HEK293 (cell line): ENCODE measurements at regions of chr19 and their contacts with region 1.

Region 1: DNA sequence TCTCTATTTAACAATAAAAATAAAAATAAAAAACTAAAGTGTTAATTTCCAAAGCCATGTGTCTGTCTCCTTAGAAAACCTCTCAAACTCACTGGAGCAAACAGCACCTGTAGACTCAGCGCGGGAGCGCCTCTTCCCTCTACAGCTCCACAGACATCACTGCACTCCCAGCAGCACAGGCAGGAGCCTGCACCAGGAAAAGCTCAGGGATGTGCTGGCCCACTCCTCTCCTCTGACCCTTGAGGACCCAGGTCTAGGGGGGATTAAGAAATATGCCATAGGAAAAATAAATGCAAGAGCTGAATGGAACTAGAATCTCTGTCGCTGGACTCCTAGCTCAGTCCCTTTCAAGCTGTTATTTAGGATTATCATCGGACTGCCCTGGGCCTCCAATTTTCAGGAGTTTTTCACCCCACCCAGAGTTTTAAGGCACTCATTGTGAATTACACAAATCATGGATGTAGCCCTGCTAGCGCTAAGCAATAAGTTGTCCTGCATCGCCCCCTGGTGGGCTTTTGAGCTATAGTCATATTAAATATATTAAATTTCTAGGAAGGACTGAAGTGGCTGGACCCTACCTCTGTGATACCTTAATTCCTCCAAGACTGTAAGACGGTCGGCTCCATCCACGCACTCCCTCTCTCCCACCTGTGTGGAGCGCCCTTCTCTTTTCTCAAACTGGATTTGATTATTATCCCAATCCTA is 333.9 kb downstream of the UQCRFS1 start:
- H3K4me3 ChIP-seq: no peak overlapping the region
- H3K27ac ChIP-seq: no peak overlapping the region
- H3K4me1 ChIP-seq: peaks cover 4% of the 10 kb centered on the region; the same call in 1 of the 2 replicates
- CTCF ChIP-seq: peak; percentile 65; the same call in 1 of the 2 replicates

Region 2: DNA sequence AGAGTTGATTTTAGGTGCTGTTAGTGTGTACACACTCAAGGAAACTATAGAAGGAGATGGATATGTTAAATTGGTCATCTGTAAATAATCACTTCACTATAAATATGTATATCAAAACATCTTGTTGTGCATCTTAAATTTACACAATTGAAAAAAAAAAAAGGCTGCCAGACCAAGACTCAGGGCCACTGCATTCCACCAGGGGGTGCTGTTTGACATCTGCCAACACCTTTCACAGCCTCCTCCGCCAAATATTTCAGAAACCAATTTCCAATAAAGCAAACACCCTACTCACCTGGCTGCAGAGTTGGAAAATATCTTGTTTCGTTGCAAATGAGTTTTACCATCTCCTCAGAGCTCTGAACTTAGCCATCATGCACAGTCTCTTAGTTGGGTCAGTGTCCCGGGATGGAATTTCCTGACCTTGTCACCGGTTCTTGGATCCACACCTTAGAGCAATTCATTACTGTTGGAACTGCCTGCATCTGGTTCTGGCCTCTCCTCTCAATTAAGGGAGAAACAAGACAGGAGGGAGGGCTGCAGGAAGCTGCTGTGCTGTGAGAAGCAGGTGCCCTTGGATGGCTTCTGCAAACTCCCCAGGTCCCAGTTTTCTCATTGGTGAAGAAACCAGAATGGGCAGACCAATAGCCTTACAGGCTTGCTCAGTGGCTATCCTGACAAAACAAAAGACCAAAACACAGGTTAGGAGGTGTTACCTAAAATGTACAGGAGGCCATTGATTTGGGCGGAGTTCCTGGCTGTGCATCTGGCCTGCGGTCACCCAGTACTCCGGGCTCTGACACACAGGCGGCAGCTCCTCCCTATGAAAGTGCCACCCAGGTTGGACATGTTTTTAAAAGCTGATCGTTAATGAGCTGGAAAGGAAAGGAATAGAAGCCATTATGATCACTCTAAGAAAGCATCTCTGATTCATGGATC is 412.6 kb before region 1 on chr19:
- CTCF ChIA-PET with region 1: interaction called, 18 read pairs
- POLR2A ChIA-PET with region 1: no interaction called
- H3K4me3 ChIP-seq: no peak overlapping the region
- H3K27ac ChIP-seq: no peak overlapping the region
- H3K4me1 ChIP-seq: peaks cover 11% of the 10 kb centered on the region
- CTCF ChIP-seq: peak; percentile 80

Region 3: GRCh38 chr19:28710278-28710677 is 168.7 kb before region 1 on chr19:
- CTCF ChIA-PET with region 1: interaction called, 13 read pairs
- POLR2A ChIA-PET with region 1: no interaction called
- H3K4me3 ChIP-seq: no peak overlapping the region
- H3K27ac ChIP-seq: no peak overlapping the region
- H3K4me1 ChIP-seq: peaks cover 8% of the 10 kb centered on the region; the same call in 1 of the 2 replicates
- CTCF ChIP-seq: peak; percentile 77

Region 4: GRCh38 chr19:28737021-28737895 is 141.8 kb before region 1 on chr19:
- CTCF ChIA-PET with region 1: interaction called, 263 read pairs
- POLR2A ChIA-PET with region 1: no interaction called
- H3K4me3 ChIP-seq: no peak overlapping the region
- H3K27ac ChIP-seq: no peak overlapping the region
- H3K4me1 ChIP-seq: no peaks in the 10 kb centered on the region
- CTCF ChIP-seq: 0 out of 2 replicates have a peak, but pooled peaks have one; percentile 39

Region 5: GRCh38 chr19:29121684-29122083 is 242.7 kb after region 1 on chr19:
- CTCF ChIA-PET with region 1: interaction called, 10 read pairs
- POLR2A ChIA-PET with region 1: no interaction called
- H3K4me3 ChIP-seq: no peak overlapping the region
- H3K27ac ChIP-seq: no peak overlapping the region
- H3K4me1 ChIP-seq: peaks cover 3% of the 10 kb centered on the region; the same call in 1 of the 2 replicates
- CTCF ChIP-seq: no peak